CD8-positive, alpha-beta memory T cell (primary cell): ENCODE measurements at regions of chr12 and their contacts with region 1.

Region 1: GRCh38 chr12:44875954-44876553 is at the start of gene NELL2:
- DNase-seq: peak; percentile 58 to 76 (median 60)
- H3K4me3 ChIP-seq: peak within 1 kb of the TSS; percentile 74
- H3K4me3 Mint-ChIP-seq: peak within 1 kb of the TSS; percentile 96 to 99 (median 98)
- H3K27ac ChIP-seq: peak within 1 kb of the TSS; percentile 26
- H3K27ac Mint-ChIP-seq: peak within 1 kb of the TSS; percentile 64 to 96 (median 92)
- H3K4me1 ChIP-seq: peaks cover 17% of the 10 kb centered on the region
- H3K4me1 Mint-ChIP-seq: peaks cover 38 to 54% (median 40%) of the 10 kb centered on the region in 3 donors
- H3K27me3 ChIP-seq: peaks cover 3% of the 10 kb centered on the region
- H3K27me3 Mint-ChIP-seq: peaks cover 12 to 14% of the 10 kb centered on the region in 2 donors
- total RNA-seq, gene NELL2: 60.2 to 67.0 TPM

Region 2: GRCh38 chr12:44774815-44775411 is 101.1 kb before region 1 on chr12:
- CTCF ChIA-PET with region 1: interaction called, 39 read pairs
- POLR2A ChIA-PET with region 1: interaction called, 9 read pairs
- DNase-seq: peak; percentile 42 to 72 (median 52)
- H3K4me3 ChIP-seq: no peak overlapping the region
- H3K4me3 Mint-ChIP-seq: no peak overlapping the region
- H3K27ac ChIP-seq: no peak overlapping the region
- H3K27ac Mint-ChIP-seq: no peak overlapping the region
- H3K4me1 ChIP-seq: no peaks in the 10 kb centered on the region
- H3K4me1 Mint-ChIP-seq: peaks cover 3 to 4% (median 4%) of the 10 kb centered on the region in 3 donors
- H3K27me3 ChIP-seq: no peaks in the 10 kb centered on the region
- H3K27me3 Mint-ChIP-seq: peaks cover 0 to 1% of the 10 kb centered on the region in 2 donors

Region 3: GRCh38 chr12:44780221-44780790 is 95.7 kb before region 1 on chr12:
- CTCF ChIA-PET with region 1: interaction called, 39 read pairs
- POLR2A ChIA-PET with region 1: interaction called, 9 read pairs
- DNase-seq: no peak
- H3K4me3 ChIP-seq: no peak overlapping the region
- H3K4me3 Mint-ChIP-seq: no peak overlapping the region
- H3K27ac ChIP-seq: no peak overlapping the region
- H3K27ac Mint-ChIP-seq: peak overlapping the region in 2 of 8 donors; percentile 25 to 36
- H3K4me1 ChIP-seq: no peaks in the 10 kb centered on the region
- H3K4me1 Mint-ChIP-seq: peaks cover 23 to 49% (median 36%) of the 10 kb centered on the region in 3 donors
- H3K27me3 ChIP-seq: no peaks in the 10 kb centered on the region
- H3K27me3 Mint-ChIP-seq: peaks cover 0 to 3% of the 10 kb centered on the region in 2 donors

Region 4: DNA sequence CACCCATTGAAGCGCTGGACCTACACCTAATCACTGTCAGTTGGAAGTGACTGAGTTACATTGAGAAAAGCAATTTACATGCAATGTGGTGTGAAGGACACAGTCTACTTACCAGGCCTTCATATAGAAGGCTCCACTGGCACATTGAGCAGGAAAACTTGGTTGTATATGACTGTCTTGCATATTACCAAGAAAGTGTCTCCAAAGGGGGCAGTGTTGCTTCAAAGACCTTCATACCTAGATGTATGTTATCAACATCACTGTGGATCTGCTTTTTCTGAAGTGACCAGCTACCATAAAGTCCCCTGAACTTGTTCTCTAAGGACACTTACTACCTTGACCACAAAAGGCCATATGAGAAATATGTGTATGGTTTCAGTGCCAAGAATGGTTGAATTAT is 64.0 kb before region 1 on chr12:
- CTCF ChIA-PET with region 1: interaction called, 90 read pairs
- POLR2A ChIA-PET with region 1: interaction called, 8 read pairs
- DNase-seq: peak in 4 of 5 donors; percentile 33 to 67 (median 54)
- H3K4me3 ChIP-seq: no peak overlapping the region
- H3K4me3 Mint-ChIP-seq: no peak overlapping the region
- H3K27ac ChIP-seq: no peak overlapping the region
- H3K27ac Mint-ChIP-seq: peak overlapping the region in 4 of 8 donors; percentile 15 to 75 (median 36)
- H3K4me1 ChIP-seq: peaks cover 19% of the 10 kb centered on the region
- H3K4me1 Mint-ChIP-seq: peaks cover 42 to 63% (median 60%) of the 10 kb centered on the region in 3 donors
- H3K27me3 ChIP-seq: no peaks in the 10 kb centered on the region
- H3K27me3 Mint-ChIP-seq: no peaks in the 10 kb centered on the region

Region 5: GRCh38 chr12:44842669-44843068 is 33.4 kb before region 1 on chr12:
- CTCF ChIA-PET with region 1: interaction called, 37 read pairs
- POLR2A ChIA-PET with region 1: interaction called, 17 read pairs
- DNase-seq: peak in 1 of 5 donors; percentile 49
- H3K4me3 ChIP-seq: no peak overlapping the region
- H3K4me3 Mint-ChIP-seq: peak overlapping the region; percentile 12 to 76 (median 53)
- H3K27ac ChIP-seq: no peak overlapping the region
- H3K27ac Mint-ChIP-seq: peak overlapping the region; percentile 55 to 87 (median 74)
- H3K4me1 ChIP-seq: peaks cover 78% of the 10 kb centered on the region
- H3K4me1 Mint-ChIP-seq: peaks cover 71 to 96% (median 95%) of the 10 kb centered on the region in 3 donors
- H3K27me3 ChIP-seq: no peaks in the 10 kb centered on the region
- H3K27me3 Mint-ChIP-seq: peaks cover 0 to under 1% of the 10 kb centered on the region in 2 donors

Region 6: GRCh38 chr12:44847888-44848702 is 28.0 kb before region 1 on chr12:
- CTCF ChIA-PET with region 1: interaction called, 37 read pairs
- POLR2A ChIA-PET with region 1: interaction called, 17 read pairs
- DNase-seq: peak; percentile 52 to 89 (median 87)
- H3K4me3 ChIP-seq: peak overlapping the region; percentile 51
- H3K4me3 Mint-ChIP-seq: peak overlapping the region; percentile 69 to 89 (median 77)
- H3K27ac ChIP-seq: peak overlapping the region; percentile 72
- H3K27ac Mint-ChIP-seq: peak overlapping the region; percentile 93 to 99 (median 96)
- H3K4me1 ChIP-seq: peaks cover 89% of the 10 kb centered on the region
- H3K4me1 Mint-ChIP-seq: peaks cover 76 to 95% (median 94%) of the 10 kb centered on the region in 3 donors
- H3K27me3 ChIP-seq: no peaks in the 10 kb centered on the region
- H3K27me3 Mint-ChIP-seq: peaks cover 0 to 3% of the 10 kb centered on the region in 2 donors

Region 7: DNA sequence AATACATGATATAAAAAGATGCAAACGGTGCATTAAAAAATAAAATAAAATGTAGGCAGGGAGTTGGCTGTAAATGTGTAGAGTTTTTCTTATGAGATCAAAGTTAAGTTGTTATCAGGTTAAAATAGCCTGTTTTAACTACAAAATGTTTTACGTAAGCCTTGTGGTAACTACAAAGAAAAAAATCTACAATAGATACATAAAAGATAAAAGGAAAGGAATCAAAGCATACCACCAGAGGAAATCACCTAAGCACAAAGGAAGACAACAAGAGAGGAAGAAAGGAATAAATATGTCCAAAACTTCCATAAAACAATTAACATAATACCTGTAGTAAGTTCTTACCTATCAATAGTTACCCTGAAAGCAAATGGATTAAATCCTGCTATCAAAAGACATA is 12.2 kb before region 1 on chr12:
- CTCF ChIA-PET with region 1: interaction called, 46 read pairs
- POLR2A ChIA-PET with region 1: interaction called, 3 read pairs
- DNase-seq: peak in 2 of 5 donors; percentile 53 to 74
- H3K4me3 ChIP-seq: no peak overlapping the region
- H3K4me3 Mint-ChIP-seq: peak overlapping the region in 5 of 7 donors; percentile 1 to 51 (median 35)
- H3K27ac ChIP-seq: no peak overlapping the region
- H3K27ac Mint-ChIP-seq: peak overlapping the region; percentile 12 to 78 (median 42)
- H3K4me1 ChIP-seq: peaks cover 39% of the 10 kb centered on the region
- H3K4me1 Mint-ChIP-seq: peaks cover 50 to 84% (median 73%) of the 10 kb centered on the region in 3 donors
- H3K27me3 ChIP-seq: no peaks in the 10 kb centered on the region
- H3K27me3 Mint-ChIP-seq: peaks cover 0 to 2% of the 10 kb centered on the region in 2 donors

Region 8: GRCh38 chr12:45050751-45051571 is 174.9 kb after region 1 on chr12 and contains the start of gene DBX2:
- CTCF ChIA-PET with region 1: no interaction called
- POLR2A ChIA-PET with region 1: no interaction called
- DNase-seq: no peak
- H3K4me3 ChIP-seq: no peak within 1 kb of the TSS
- H3K4me3 Mint-ChIP-seq: no peak within 1 kb of the TSS
- H3K27ac ChIP-seq: no peak within 1 kb of the TSS
- H3K27ac Mint-ChIP-seq: no peak within 1 kb of the TSS
- H3K4me1 ChIP-seq: no peaks in the 10 kb centered on the region
- H3K4me1 Mint-ChIP-seq: peaks cover 0 to 3% (median 0%) of the 10 kb centered on the region in 3 donors
- H3K27me3 ChIP-seq: no peaks in the 10 kb centered on the region
- H3K27me3 Mint-ChIP-seq: peaks cover 16 to 59% of the 10 kb centered on the region in 2 donors
- total RNA-seq, gene DBX2: not detected